ENCODE measurements at regions of chr19 and their contacts with region 1.

Region 1: DNA sequence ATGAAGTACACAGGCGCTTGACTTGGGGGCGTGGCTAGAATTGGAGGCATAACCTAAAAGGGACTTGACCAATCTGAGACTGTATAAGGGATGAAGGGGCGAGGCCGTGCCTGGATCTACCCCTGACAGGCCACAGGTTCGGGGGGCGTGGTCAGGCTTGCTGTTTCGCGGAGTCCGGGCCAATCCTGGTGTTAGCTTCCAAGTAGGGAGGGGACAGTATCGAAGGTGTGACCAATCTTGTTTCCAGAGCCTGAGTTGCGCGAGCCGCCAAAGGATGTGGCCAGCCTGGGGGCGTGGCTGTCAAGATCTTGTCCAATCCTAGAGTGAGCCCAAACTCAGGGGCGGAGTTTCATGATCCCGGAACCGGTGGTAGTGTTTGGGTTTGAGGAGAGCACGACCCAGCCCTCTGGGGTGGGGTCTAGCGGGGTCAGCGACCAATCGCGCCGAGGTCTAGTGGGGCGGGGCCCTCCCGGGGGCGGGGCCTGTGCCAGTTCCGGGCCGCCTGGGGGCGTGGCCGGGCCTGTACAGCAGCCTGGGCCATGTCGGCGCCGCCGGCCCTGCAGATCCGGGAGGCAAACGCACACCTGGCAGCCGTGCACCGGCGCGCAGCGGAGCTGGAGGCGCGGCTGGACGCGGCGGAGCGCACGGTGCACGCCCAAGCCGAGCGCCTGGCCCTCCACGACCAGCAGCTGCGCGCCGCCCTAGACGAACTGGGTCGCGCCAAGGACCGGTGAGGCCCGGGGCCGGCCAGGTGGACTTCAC is at the start of gene VMAC:
- DNase-seq: peak; percentile 99 to 100 (median 100)
- ATAC-seq: peak; percentile 76
- H3K4me3 ChIP-seq: peak within 1 kb of the TSS; percentile 89
- H3K4me3 Mint-ChIP-seq: peak within 1 kb of the TSS; percentile 93
- H3K27ac ChIP-seq: peak within 1 kb of the TSS; percentile 91
- H3K27ac Mint-ChIP-seq: peak within 1 kb of the TSS; percentile 99
- H3K4me1 ChIP-seq: peaks cover 53% of the 10 kb centered on the region
- H3K4me1 Mint-ChIP-seq: peaks cover 35% of the 10 kb centered on the region
- H3K27me3 ChIP-seq: no peaks in the 10 kb centered on the region
- H3K27me3 Mint-ChIP-seq: no peaks in the 10 kb centered on the region
- CTCF ChIP-seq: no peak
- total RNA-seq, gene VMAC: 23.4 to 25.3 TPM

Region 2: GRCh38 chr19:5690125-5690954 is 214.2 kb before region 1 on chr19 and contains the start of gene RPL36:
- CTCF ChIA-PET with region 1: no interaction called
- POLR2A ChIA-PET with region 1: interaction called, 12 read pairs
- intact Hi-C with region 1: loop called in 1 of 2 experiments (anchors 2 kb)
- DNase-seq: peak; percentile 95 to 100 (median 99)
- ATAC-seq: peak; percentile 65
- H3K4me3 ChIP-seq: peak within 1 kb of the TSS; percentile 100
- H3K4me3 Mint-ChIP-seq: peak within 1 kb of the TSS; percentile 96
- H3K27ac ChIP-seq: peak within 1 kb of the TSS; percentile 91 to 95
- H3K27ac Mint-ChIP-seq: peak within 1 kb of the TSS; percentile 96
- H3K4me1 ChIP-seq: peaks cover 54% of the 10 kb centered on the region
- H3K4me1 Mint-ChIP-seq: peaks cover 43% of the 10 kb centered on the region
- H3K27me3 ChIP-seq: no peaks in the 10 kb centered on the region
- H3K27me3 Mint-ChIP-seq: no peaks in the 10 kb centered on the region
- CTCF ChIP-seq: peak; percentile 98
- total RNA-seq, gene RPL36: 1,509 to 1,565 TPM

Region 3: DNA sequence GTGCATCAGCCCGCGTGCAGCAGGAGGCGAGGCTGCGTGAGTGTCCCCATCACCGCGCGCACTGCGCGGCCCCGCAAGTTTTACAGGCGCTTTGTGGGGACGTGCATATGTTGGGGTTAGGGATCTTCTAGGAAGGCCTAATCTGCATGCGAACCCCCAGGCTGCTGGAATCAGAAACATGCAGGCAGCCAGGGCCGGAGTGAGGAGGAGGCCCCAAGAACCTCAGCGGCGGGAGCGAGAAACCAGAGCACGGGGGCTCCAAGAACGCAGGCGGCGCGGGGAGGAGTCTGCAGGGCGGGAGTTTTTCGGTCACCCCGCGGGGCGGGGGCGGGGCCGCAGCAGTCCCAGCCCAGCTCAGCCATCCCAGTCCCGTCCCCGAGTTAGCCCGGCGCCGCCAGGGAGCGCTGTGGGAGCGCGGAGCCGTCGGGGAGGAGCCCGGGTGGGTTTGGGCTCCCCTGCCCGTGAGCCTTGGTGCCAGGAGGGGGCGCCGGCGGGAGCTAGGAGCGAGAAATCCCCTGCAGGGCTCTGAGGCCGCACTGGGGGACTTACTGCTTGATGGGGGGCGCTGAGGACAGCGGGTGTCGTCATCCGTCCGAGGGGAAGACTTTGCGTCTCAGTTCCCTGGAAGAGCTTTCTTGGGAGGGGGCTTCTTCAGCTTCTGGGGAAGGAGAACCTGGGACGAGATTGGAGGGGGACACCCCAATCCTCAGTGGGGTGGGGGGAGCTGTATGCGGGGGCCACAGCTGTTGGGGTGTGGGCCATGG is 100.6 kb before region 1 on chr19:
- CTCF ChIA-PET with region 1: interaction called, 63 read pairs
- POLR2A ChIA-PET with region 1: interaction called, 33 read pairs
- intact Hi-C with region 1: loop called (anchors 1 kb)
- DNase-seq: peak; percentile 86 to 97 (median 90)
- ATAC-seq: peak; percentile 97
- H3K4me3 ChIP-seq: peak overlapping the region; percentile 47
- H3K4me3 Mint-ChIP-seq: peak overlapping the region; percentile 83
- H3K27ac ChIP-seq: no peak overlapping the region
- H3K27ac Mint-ChIP-seq: peak overlapping the region; percentile 68
- H3K4me1 ChIP-seq: peaks cover 36% of the 10 kb centered on the region
- H3K4me1 Mint-ChIP-seq: peaks cover 18% of the 10 kb centered on the region
- H3K27me3 ChIP-seq: peaks cover 26 to 28% of the 10 kb centered on the region in 2 experiments
- H3K27me3 Mint-ChIP-seq: peaks cover 25% of the 10 kb centered on the region
- CTCF ChIP-seq: peak; percentile 81

Region 4: GRCh38 chr19:5947435-5947834 is 42.9 kb after region 1 on chr19:
- CTCF ChIA-PET with region 1: no interaction called
- POLR2A ChIA-PET with region 1: interaction called, 17 read pairs
- intact Hi-C with region 1: no loop called
- DNase-seq: peak in 2 of 14 experiments; percentile 46 to 47
- ATAC-seq: no peak
- H3K4me3 ChIP-seq: no peak overlapping the region
- H3K4me3 Mint-ChIP-seq: no peak overlapping the region
- H3K27ac ChIP-seq: peak overlapping the region; percentile 36 to 76
- H3K27ac Mint-ChIP-seq: peak overlapping the region; percentile 92
- H3K4me1 ChIP-seq: peaks cover 78% of the 10 kb centered on the region
- H3K4me1 Mint-ChIP-seq: peaks cover 73% of the 10 kb centered on the region
- H3K27me3 ChIP-seq: no peaks in the 10 kb centered on the region
- H3K27me3 Mint-ChIP-seq: no peaks in the 10 kb centered on the region
- CTCF ChIP-seq: no peak

Region 5: GRCh38 chr19:5977785-5978605 is 73.5 kb after region 1 on chr19 and contains the start of gene RANBP3:
- CTCF ChIA-PET with region 1: no interaction called
- POLR2A ChIA-PET with region 1: interaction called, 33 read pairs
- intact Hi-C with region 1: loop called in 1 of 2 experiments (anchors 1 kb)
- DNase-seq: peak; percentile 95 to 100 (median 99)
- ATAC-seq: peak; percentile 92
- H3K4me3 ChIP-seq: peak within 1 kb of the TSS; percentile 95
- H3K4me3 Mint-ChIP-seq: peak within 1 kb of the TSS; percentile 100
- H3K27ac ChIP-seq: peak within 1 kb of the TSS; percentile 78 to 85
- H3K27ac Mint-ChIP-seq: peak within 1 kb of the TSS; percentile 94
- H3K4me1 ChIP-seq: peaks cover 66% of the 10 kb centered on the region
- H3K4me1 Mint-ChIP-seq: peaks cover 52% of the 10 kb centered on the region
- H3K27me3 ChIP-seq: no peaks in the 10 kb centered on the region
- H3K27me3 Mint-ChIP-seq: no peaks in the 10 kb centered on the region
- CTCF ChIP-seq: no peak
- total RNA-seq, gene RANBP3: 82.7 to 88.7 TPM

Region 6: DNA sequence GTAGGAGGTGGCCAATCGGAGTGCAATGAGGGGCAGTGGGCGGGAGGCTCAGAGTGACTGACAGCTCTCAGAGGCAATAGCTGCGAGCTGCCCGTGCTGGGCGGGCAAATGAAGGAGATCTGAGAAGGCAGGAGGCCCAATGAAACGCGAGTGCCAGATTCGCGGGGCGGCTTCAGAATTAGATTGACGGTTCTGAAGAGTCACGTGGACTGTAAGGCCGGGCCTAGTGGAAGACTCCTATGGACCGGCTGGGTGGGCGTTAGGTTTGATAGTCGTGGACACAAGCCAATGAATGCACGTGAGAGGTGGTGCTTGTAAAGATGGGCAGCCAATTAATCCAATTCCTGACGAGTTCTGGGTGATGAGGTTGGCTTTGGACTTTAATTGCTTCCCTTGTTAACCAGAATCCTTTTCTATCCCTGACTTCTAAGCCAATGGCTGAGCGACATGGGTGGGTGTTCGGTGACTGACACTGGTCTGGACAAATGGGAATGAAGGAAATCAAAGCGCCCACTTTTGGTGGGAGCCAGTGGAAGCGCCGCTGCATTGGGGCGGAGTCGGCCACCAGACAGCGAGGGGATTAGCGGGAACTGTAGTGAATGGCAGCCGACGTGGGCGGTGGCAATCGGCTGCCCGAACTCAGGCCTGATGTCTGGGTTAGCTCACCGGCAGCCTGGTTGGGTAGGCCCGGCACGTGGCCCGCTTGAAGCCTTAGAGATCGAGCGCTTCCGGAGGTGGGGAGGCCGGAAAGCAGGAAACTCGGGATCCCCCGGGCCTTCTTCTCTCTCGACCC is 520.6 kb after region 1 on chr19:
- CTCF ChIA-PET with region 1: no interaction called
- POLR2A ChIA-PET with region 1: interaction called, 10 read pairs
- intact Hi-C with region 1: no loop called
- DNase-seq: peak; percentile 96 to 100 (median 98)
- ATAC-seq: peak; percentile 83
- H3K4me3 ChIP-seq: peak overlapping the region; percentile 46
- H3K4me3 Mint-ChIP-seq: peak overlapping the region; percentile 90
- H3K27ac ChIP-seq: peak overlapping the region; percentile 75 to 87
- H3K27ac Mint-ChIP-seq: peak overlapping the region; percentile 81
- H3K4me1 ChIP-seq: peaks cover 48% of the 10 kb centered on the region
- H3K4me1 Mint-ChIP-seq: peaks cover 37% of the 10 kb centered on the region
- H3K27me3 ChIP-seq: no peaks in the 10 kb centered on the region
- H3K27me3 Mint-ChIP-seq: no peaks in the 10 kb centered on the region
- CTCF ChIP-seq: no peak